Left cardiac atrium (tissue), 4 donors: ENCODE measurements at regions of chr17 and their contacts with region 1.

Region 1: DNA sequence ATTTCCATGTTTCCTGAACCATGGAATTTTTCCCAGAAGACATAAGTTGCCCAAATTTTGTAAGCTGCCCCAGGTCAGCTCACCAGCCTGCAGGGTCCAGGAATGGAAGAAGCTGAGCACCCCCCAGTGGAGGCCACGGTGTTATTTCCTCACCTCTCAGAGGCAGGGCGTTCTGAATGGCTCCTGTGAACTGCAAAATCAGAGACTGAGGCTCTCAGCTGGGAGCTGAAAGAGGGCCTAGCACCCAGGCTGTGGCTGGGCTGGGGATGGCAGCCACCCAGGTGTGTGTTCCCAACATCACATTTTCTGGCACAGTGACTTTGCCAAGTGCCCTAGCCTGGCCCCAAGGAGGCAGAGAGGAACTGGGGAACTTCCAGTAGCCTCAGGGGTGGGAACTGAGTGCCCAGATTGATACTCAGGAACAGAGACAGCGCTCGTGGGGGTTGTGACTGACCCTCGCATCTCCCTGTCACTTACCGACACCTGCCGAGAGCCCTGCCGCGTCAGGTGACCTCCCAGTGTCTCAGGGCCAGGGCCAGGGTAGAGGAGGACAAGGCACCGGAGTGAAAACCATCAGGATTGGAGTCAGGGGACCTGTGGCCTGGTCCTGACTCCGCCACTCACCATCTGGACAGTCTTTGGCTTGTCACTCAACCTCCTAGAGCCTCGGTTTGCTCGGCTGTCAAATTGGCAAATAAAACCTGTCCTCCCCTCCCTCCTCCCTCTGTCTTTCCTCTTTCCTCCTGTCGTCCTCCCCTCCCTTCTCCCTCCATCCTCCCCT is 11.3 kb downstream of the CACNG4 start:
- DNase-seq: no peak
- ATAC-seq: peak in 1 of 2 donors; percentile 13

Region 2: DNA sequence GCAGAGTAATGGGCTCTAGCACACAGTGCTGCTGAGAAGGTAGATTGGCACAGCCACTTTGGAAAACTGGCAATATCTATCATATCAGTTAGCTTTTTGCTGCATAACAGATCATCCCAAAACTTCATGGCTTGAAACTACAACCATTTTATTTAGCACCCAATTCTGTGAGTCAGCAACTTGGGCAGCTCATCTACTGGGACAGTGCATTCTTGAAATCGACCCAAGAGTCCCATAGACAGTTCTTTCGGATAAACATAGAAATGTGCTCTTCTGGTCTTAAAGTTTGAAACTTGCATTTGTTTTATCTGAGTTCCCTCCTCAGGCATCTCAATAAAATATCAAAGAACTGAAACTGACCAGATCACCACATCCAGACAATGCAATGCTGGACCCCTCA is 860.5 kb before region 1 on chr17:
- intact Hi-C with region 1: no loop called
- DNase-seq: no peak
- ATAC-seq: no peak

Region 3: GRCh38 chr17:66737524-66737923 is 238.3 kb before region 1 on chr17:
- intact Hi-C with region 1: loop called in 1 of 2 experiments (anchors 10 kb)
- DNase-seq: peak; percentile 73
- ATAC-seq: peak; percentile 90 to 97

Region 4: GRCh38 chr17:67121316-67121887 is 145.6 kb after region 1 on chr17:
- intact Hi-C with region 1: no loop called
- DNase-seq: no peak
- ATAC-seq: peak; percentile 56 to 78

Region 5: GRCh38 chr17:67401598-67402488 is 426.0 kb after region 1 on chr17:
- intact Hi-C with region 1: no loop called
- DNase-seq: no peak
- ATAC-seq: no peak